CD8-positive, alpha-beta T cell (primary cell): ENCODE measurements at regions of chr15 and their contacts with region 1.

Region 1: DNA sequence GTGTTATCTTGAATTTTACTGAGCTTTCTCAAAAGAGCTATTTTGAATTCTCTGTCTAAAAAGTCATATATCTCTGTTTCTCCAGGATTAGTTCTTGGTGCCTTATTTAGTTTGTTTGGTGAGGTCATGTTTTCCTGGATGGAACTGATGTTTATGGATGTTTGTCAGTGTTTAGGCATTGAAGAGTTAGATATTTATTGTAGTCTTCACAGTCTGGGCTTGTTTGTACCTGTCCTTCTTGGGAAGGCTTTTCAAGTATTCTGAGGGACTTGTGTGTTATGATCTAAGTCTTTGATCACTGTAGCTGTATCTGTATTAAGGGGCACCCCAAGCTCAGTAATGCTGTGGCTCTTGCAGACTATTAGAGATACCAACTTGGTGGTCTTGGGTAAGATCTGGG is 10.6 kb upstream of the RAD51 start:
- DNase-seq: no peak
- ATAC-seq: no peak
- H3K4me3 ChIP-seq: no peak overlapping the region
- H3K4me3 Mint-ChIP-seq: no peak overlapping the region
- H3K27ac ChIP-seq: no peak overlapping the region
- H3K27ac Mint-ChIP-seq: peak overlapping the region; percentile 8
- H3K4me1 ChIP-seq: no peaks in the 10 kb centered on the region
- H3K4me1 Mint-ChIP-seq: no peaks in the 10 kb centered on the region
- H3K27me3 ChIP-seq: no peaks in the 10 kb centered on the region
- H3K27me3 Mint-ChIP-seq: no peaks in the 10 kb centered on the region
- CTCF ChIP-seq: no peak

Region 2: GRCh38 chr15:40776522-40777137 is 92.2 kb after region 1 on chr15:
- CTCF ChIA-PET with region 1: interaction called, 69 read pairs
- POLR2A ChIA-PET with region 1: no interaction called
- intact Hi-C with region 1: loop called in 1 of 2 experiments (anchors 5 kb)
- DNase-seq: peak in 6 of 9 experiments; percentile 46 to 89 (median 66)
- ATAC-seq: peak; percentile 96
- H3K4me3 ChIP-seq: no peak overlapping the region
- H3K4me3 Mint-ChIP-seq: no peak overlapping the region
- H3K27ac ChIP-seq: peak overlapping the region in 1 of 2 experiments; percentile 38
- H3K27ac Mint-ChIP-seq: peak overlapping the region; percentile 70
- H3K4me1 ChIP-seq: peaks cover 7% of the 10 kb centered on the region
- H3K4me1 Mint-ChIP-seq: peaks cover 7% of the 10 kb centered on the region
- H3K27me3 ChIP-seq: no peaks in the 10 kb centered on the region
- H3K27me3 Mint-ChIP-seq: no peaks in the 10 kb centered on the region
- CTCF ChIP-seq: no peak